SK-N-SH (cell line): ENCODE measurements at regions of chr11 and their contacts with region 1.

Region 1: DNA sequence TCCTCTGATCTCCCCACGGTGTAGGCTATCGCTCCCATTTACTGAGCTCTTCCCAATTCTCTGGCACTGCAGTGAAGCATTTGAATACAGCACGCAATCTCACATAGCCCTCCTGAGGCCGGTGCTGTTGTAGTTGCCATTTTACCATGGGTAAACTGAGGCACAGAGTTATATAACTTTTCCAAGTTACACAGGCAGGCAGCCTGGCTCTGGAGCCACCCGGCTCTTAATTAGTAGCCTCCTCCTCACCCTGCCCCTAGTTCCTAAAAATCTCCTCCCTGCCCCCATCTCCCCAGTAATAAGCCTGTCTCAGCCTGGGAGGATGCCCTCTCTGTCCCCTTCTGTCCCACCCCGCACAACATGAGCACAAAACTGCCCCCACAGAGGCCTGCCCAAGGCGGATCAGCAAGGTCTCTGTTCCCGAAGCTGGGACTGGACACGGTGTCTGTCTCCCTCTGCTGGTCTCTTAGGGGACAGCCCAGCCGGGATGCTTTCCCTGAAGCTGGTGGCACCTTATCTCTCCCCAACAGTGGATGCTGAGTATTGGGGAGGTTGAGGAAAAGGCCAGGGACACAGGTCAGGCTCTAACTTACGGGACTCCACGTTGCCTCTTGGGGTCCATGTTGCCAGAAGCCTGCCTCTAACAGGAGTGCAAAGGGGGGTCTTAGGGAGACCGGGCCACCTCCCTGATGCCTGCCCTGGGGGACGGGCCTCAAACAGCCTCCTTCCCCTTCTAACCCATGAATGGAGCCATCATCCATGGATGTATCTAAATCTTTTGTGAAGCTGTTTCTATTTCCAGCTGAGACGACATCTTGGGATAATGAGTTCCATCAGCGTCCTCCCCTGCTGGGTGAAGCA is 9.1 kb upstream of the CLCF1 start:
- DNase-seq: peak; percentile 86
- H3K4me3 ChIP-seq: no peak overlapping the region; a peak in 1 of 4 replicates
- H3K27ac ChIP-seq: no peak overlapping the region
- H3K4me1 ChIP-seq: peaks cover 20 to 29% of the 10 kb centered on the region in 2 experiments; a peak in 3 of 4 replicates
- H3K27me3 ChIP-seq: no peaks in the 10 kb centered on the region
- CTCF ChIP-seq: peak; percentile 94
- EP300 ChIP-seq: no peak
- RAD21 ChIP-seq: peak; percentile 99

Region 2: DNA sequence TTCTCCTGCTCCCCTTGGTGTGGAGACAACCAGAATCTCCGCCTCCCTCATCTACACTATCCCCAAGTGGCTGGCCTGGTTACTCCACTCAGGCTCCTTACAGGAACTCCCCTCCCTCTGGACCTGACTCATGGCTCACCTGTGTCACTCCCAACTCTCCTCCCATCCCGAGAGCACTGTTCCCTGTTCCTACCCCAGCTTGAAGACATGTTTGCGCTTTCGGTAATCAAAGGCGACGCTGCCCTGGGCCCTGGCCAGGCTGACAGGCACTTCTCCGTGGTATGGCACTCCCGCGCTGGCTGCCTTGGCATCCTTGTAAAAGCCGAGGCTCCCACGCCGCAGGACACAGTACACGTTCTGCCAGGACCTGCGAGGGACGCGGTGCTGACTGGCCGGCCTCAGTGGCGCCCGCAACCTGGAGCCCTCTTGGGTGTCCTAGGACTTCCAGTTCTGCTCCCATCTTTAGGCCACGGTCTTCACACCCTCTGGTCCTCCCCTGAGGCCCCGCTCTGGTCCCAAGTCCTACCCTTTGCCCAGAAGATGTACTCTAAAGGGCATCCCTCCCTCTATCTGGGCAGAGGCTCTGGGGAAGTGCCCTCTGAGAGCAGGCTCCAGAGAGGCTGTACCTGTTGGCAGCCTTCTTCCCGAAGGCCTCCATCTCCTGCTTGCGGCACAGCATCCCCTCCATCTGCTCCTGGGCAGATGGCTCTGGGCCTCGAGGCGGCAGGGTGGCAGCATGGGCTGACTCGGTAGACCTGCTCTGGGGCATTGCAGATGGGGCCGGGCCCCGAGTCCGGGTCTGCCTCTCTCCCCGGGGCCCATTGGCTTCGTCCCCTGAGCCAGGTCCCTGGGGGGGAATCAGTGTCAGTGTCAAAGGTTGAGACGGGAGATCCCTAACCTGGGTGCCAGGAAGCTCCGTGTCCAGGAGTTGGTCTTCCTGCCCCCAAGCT is 695.4 kb before region 1 on chr11:
- CTCF ChIA-PET with region 1: no interaction called
- POLR2A ChIA-PET with region 1: no interaction called
- DNase-seq: peak; percentile 19
- H3K4me3 ChIP-seq: no peak overlapping the region
- H3K27ac ChIP-seq: no peak overlapping the region
- H3K4me1 ChIP-seq: peaks cover 0 to 15% of the 10 kb centered on the region in 2 experiments; a peak in 1 of 4 replicates
- H3K27me3 ChIP-seq: no peaks in the 10 kb centered on the region
- CTCF ChIP-seq: no peak
- EP300 ChIP-seq: no peak
- RAD21 ChIP-seq: no peak

Region 3: GRCh38 chr11:67288452-67289225 is 93.9 kb before region 1 on chr11:
- CTCF ChIA-PET with region 1: interaction called, 10 read pairs
- POLR2A ChIA-PET with region 1: no interaction called
- DNase-seq: peak; percentile 97
- H3K4me3 ChIP-seq: peak overlapping the region; percentile 65 to 87
- H3K27ac ChIP-seq: peak overlapping the region; percentile 91 to 98
- H3K4me1 ChIP-seq: peaks cover 9 to 30% of the 10 kb centered on the region in 2 experiments; a peak in 3 of 4 replicates
- H3K27me3 ChIP-seq: no peaks in the 10 kb centered on the region
- CTCF ChIP-seq: peak; percentile 31; the same call in 1 of the 2 replicates
- EP300 ChIP-seq: peak in 1 of 2 experiments; percentile 5; a peak in 1 of 4 replicates
- RAD21 ChIP-seq: peak; percentile 26; the same call in 1 of the 2 replicates

Region 4: DNA sequence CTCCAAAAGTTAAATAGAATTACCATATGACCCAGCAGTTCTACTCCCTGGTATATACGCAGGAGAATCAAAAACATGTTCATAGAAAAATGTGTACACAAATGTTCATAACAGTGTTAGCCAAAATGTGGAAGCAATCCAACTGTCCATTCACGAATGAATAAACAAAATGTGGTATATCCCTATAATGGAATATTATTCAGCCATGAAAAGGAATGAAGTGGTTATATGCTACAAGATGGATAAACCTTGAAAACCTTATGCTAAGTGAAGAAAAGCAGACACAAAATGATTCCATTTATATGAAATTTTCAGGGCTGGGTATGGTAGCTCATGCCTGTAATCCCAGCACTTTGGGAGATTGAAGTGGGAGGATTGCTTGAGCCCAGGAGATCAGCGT is 45.2 kb before region 1 on chr11:
- CTCF ChIA-PET with region 1: interaction called, 116 read pairs
- POLR2A ChIA-PET with region 1: no interaction called
- DNase-seq: no peak
- H3K4me3 ChIP-seq: no peak overlapping the region
- H3K27ac ChIP-seq: no peak overlapping the region
- H3K4me1 ChIP-seq: no peaks in the 10 kb centered on the region
- H3K27me3 ChIP-seq: no peaks in the 10 kb centered on the region
- CTCF ChIP-seq: no peak
- EP300 ChIP-seq: no peak
- RAD21 ChIP-seq: no peak

Region 5: GRCh38 chr11:67353317-67354074 is 29.0 kb before region 1 on chr11 and contains the start of gene POLD4:
- CTCF ChIA-PET with region 1: interaction called, 955 read pairs
- POLR2A ChIA-PET with region 1: interaction called, 9 read pairs
- DNase-seq: peak; percentile 97
- H3K4me3 ChIP-seq: peak within 1 kb of the TSS; percentile 66 to 76
- H3K27ac ChIP-seq: peak within 1 kb of the TSS; percentile 92 to 99
- H3K4me1 ChIP-seq: peaks cover 44 to 51% of the 10 kb centered on the region in 2 experiments; a peak in 3 of 4 replicates
- H3K27me3 ChIP-seq: no peaks in the 10 kb centered on the region
- CTCF ChIP-seq: no peak
- EP300 ChIP-seq: no peak
- RAD21 ChIP-seq: no peak
- polyA plus RNA-seq, gene POLD4: 80.4 and 89.4 TPM in 2 replicates

Region 6: DNA sequence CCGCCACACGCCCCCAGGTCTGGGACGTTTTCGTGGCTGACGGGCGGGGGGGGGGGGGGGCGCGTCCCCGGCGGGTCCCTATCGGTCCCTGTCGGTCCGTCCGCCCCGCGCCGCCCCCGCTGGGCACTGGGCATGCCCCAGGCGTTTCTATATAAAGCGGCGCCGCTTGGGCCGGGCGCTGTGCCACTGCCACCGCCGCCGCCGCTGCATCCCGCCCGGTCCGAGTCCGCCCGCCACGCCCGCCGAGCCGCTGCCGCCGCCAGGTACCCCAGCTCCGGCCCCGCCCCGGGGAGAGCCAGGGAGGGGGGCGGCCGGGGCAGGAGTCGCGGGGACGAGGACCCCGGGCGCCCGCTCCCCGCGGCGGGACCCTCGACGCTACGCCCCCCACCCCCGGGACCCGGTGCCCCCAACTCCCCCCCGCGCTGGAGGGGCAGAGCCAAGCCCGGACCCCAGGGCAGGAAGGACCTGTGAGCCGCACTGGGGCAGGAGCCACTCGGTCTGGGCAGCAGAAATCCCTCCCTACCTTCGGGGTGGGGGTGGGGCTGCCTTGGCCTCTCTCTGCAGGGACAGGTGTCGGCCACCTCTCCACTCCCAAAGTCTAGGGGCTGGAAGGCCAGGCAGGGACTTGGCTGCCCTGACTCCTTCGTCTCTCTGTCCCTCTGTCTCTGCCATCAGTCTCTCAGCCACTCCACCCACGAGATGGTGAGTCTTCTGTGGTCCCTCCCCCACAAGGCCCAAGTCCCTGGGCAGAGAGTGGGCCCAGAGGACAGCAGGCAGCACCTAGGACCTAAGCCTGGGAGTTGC is 33.2 kb after region 1 on chr11 and contains the start of gene CARNS1:
- CTCF ChIA-PET with region 1: interaction called, 11 read pairs
- POLR2A ChIA-PET with region 1: no interaction called
- DNase-seq: no peak
- H3K4me3 ChIP-seq: peak within 1 kb of the TSS in 1 of 2 experiments; percentile 12; a peak in 1 of 4 replicates
- H3K27ac ChIP-seq: no peak within 1 kb of the TSS
- H3K4me1 ChIP-seq: peaks cover 8 to 9% of the 10 kb centered on the region in 2 experiments; a peak in 2 of 4 replicates
- H3K27me3 ChIP-seq: no peaks in the 10 kb centered on the region
- CTCF ChIP-seq: no peak
- EP300 ChIP-seq: no peak
- RAD21 ChIP-seq: no peak
- polyA plus RNA-seq, gene CARNS1: 0.15 and 0.23 TPM in 2 replicates